ENCODE measurements at regions of chr11 and their contacts with region 1.

Region 1: DNA sequence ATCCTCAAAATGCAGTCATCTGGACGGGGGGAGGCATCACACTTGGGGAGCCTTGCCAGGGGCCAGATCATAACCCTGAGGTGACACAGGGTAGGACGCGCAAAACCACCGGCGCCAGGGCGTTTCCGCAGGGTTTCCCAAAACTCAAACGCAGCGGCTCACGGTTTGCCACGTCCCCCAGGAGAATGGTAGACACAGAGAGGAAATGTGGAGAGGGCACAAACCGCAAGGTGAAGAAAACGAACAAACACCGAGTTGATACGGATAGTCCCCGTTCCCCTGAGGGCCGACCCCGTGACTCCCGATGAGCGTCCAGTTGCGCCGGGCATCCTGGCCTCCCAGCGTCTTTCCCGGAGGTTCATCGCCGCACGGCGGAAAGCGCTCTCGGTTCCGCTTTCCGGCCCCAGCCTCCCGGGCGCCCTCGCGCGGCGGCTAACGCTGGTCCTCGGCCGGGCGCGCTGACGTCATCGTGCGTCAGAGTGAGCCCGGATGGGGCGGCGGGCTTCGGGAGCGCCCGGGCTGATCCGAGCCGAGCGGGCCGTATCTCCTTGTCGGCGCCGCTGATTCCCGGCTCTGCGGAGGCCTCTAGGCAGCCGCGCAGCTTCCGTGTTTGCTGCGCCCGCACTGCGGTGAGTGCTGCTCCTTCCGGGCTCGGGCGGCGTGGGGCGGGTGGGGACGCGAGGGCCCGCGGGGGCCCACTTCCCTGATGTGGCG is at the start of gene BIRC2:
- DNase-seq: peak; percentile 99
- ATAC-seq: peak; percentile 78
- H3K4me3 ChIP-seq: peak within 1 kb of the TSS; percentile 88
- H3K27ac ChIP-seq: peak within 1 kb of the TSS; percentile 90
- H3K4me1 ChIP-seq: peaks cover 34% of the 10 kb centered on the region
- H3K27me3 ChIP-seq: no peaks in the 10 kb centered on the region
- CTCF ChIP-seq: peak; percentile 77
- total RNA-seq, gene BIRC2: 36.1 and 42.6 TPM in 2 replicates

Region 2: GRCh38 chr11:102177974-102178631 is 168.8 kb before region 1 on chr11:
- CTCF ChIA-PET with region 1: no interaction called
- POLR2A ChIA-PET with region 1: no interaction called
- intact Hi-C with region 1: loop called (anchors 5 kb)
- DNase-seq: peak; percentile 99
- ATAC-seq: peak; percentile 90
- H3K4me3 ChIP-seq: peak overlapping the region; percentile 26; the same call in 1 of the 2 replicates
- H3K27ac ChIP-seq: peak overlapping the region; percentile 80
- H3K4me1 ChIP-seq: peaks cover 27% of the 10 kb centered on the region
- H3K27me3 ChIP-seq: no peaks in the 10 kb centered on the region
- CTCF ChIP-seq: no peak

Region 3: GRCh38 chr11:102287964-102288724 is 58.8 kb before region 1 on chr11:
- CTCF ChIA-PET with region 1: no interaction called
- POLR2A ChIA-PET with region 1: no interaction called
- intact Hi-C with region 1: loop called (anchors 1 kb)
- DNase-seq: peak; percentile 96
- ATAC-seq: peak; percentile 70
- H3K4me3 ChIP-seq: peak overlapping the region; percentile 52
- H3K27ac ChIP-seq: peak overlapping the region; percentile 13
- H3K4me1 ChIP-seq: peaks cover 40% of the 10 kb centered on the region
- H3K27me3 ChIP-seq: no peaks in the 10 kb centered on the region
- CTCF ChIP-seq: peak; percentile 93

Region 4: DNA sequence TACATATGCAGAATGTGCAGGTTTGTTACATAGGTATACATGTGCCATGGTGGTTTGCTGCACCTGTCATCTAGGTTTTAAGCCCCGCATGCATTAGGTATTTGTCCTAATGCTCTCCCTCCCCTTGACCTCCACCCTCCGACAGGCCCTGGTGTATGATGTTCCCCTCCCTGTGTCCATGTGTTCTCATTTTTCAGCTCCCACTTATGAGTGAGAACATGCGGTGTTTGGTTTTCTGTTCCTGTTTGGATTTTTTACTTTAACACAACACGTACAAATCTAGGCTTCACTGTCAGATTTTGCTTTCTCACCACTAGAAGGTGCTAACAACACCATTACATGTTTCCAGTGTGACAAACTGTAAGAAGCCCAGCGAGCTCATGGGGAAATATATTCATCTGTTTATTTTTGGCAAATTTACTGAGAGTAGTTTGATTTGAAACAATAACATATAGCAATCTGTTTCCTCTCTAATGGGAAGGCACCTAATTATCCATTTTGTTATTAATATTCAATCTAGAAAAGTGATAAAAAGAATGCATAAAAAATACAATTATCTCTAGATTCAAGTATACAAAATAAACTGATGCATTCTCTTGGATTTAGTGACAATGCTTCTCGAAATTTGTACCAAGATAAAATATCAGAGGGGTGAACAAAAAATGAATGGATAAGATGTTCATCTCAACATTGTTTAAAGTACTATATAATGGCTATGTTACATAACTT is 52.9 kb before region 1 on chr11:
- CTCF ChIA-PET with region 1: interaction called, 7 read pairs
- POLR2A ChIA-PET with region 1: interaction called, 3 read pairs
- intact Hi-C with region 1: loop called (anchors 1 kb)
- DNase-seq: peak; percentile 80
- ATAC-seq: peak; percentile 49
- H3K4me3 ChIP-seq: no peak overlapping the region
- H3K27ac ChIP-seq: no peak overlapping the region
- H3K4me1 ChIP-seq: peaks cover 25% of the 10 kb centered on the region
- H3K27me3 ChIP-seq: no peaks in the 10 kb centered on the region
- CTCF ChIP-seq: peak; percentile 82

Region 5: DNA sequence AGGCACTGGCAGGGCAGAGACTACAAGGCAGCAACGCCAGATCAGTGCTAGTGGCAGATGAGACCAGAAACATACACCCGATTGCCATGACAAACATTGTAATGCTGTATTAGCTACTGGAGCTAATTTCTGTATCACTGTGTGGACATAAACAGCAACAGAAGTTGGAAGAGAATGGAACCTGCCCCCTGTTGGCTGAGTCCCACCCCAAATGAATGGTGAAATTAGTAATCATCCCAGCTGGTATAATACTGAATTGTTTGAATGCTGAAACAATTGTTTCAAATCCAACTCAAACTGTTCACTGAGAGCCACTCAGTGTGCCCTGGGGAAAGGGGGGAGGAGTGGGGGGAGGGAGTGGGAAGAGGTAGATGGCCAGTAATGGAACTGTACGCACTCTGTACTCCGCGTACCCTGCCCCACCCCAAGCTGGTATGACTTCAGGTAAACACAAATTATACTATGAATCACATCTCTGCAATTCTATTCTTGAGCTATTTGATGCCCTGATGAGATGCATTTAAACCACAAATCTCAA is 40.8 kb before region 1 on chr11:
- CTCF ChIA-PET with region 1: interaction called, 4 read pairs
- POLR2A ChIA-PET with region 1: no interaction called
- intact Hi-C with region 1: loop called (anchors 5 kb)
- DNase-seq: peak; percentile 98
- ATAC-seq: peak; percentile 94
- H3K4me3 ChIP-seq: peak overlapping the region; percentile 55
- H3K27ac ChIP-seq: peak overlapping the region; percentile 87
- H3K4me1 ChIP-seq: peaks cover 37% of the 10 kb centered on the region
- H3K27me3 ChIP-seq: no peaks in the 10 kb centered on the region
- CTCF ChIP-seq: peak; percentile 63

Region 6: DNA sequence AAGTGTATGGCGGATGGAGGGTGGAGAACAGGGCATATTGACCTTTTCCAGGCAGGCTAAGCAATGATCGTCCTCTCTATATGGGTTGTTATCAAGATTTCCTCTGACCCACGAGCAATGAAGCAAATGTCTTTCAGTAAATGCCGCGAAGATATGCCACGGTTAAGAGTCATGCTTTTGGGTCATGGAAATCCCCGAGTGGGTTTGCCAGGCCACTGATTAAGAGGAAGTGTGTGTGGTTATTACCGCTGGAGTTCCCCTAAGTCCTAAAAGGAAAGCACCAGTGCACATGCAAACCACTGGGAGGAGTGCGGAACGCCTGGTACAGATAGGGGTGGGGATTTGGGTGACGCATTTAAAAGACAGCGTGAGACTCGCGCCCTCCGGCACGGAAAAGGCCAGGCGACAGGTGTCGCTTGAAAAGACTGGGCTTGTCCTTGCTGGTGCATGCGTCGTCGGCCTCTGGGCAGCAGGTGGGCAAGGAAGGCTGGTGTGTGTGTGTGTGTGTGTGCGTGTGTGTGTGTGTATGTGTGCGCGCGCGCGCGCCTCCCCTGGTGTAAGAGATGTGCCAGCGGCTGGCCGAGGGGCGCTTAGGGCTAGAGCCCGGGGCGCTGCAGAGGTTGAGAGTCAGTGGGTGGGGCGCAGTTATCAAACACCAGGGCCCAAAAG is 29.7 kb before region 1 on chr11 and contains the start of gene BIRC3:
- CTCF ChIA-PET with region 1: interaction called, 3 read pairs
- POLR2A ChIA-PET with region 1: interaction called, 14 read pairs
- intact Hi-C with region 1: loop called (anchors 1 kb)
- DNase-seq: peak; percentile 97
- ATAC-seq: peak; percentile 88
- H3K4me3 ChIP-seq: peak within 1 kb of the TSS; percentile 66
- H3K27ac ChIP-seq: peak within 1 kb of the TSS; percentile 74
- H3K4me1 ChIP-seq: peaks cover 35% of the 10 kb centered on the region
- H3K27me3 ChIP-seq: no peaks in the 10 kb centered on the region
- CTCF ChIP-seq: no peak; the same call in 1 of the 2 replicates
- total RNA-seq, gene BIRC3: 3.9 and 4.2 TPM in 2 replicates

Region 7: DNA sequence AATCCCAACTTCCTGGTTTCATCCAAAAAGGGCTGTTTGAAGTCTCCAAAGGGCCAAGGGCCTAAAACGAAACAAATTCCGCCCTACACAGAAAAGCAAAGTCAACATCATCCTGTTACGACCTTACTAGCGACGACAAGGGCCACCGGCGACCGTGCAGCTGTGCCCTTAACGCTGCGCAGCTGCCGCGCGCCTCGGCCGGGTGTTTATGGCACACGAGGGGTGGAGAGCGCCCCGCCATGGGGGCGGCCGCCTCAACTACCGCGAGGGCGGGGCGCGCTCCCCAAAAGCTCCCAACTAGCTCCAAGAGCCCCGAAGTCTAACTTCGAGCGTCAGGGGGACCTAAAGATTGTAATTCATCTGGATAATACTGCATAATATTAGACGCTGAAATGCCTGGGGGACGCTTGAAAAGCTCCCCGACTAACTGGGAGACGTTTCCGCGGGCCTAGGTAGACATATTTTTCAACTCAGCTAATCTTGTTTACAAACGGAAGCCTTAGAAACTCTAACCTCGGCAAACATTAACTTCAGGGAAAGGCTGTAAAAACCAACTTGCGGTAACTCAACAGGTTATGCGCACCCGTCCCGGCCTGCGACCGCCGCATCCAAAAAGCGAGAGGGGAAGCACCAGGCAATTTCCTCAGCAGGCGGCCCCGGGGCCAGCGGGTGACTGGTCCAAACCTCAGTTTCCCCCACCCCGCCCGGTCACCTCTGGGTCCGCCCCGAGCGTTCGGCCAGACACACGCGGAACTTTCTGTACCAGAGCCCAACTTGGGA is 105.0 kb after region 1 on chr11:
- CTCF ChIA-PET with region 1: no interaction called
- POLR2A ChIA-PET with region 1: no interaction called
- intact Hi-C with region 1: loop called (anchors 2 kb)
- DNase-seq: peak; percentile 67
- ATAC-seq: peak; percentile 49
- H3K4me3 ChIP-seq: peak overlapping the region; percentile 81
- H3K27ac ChIP-seq: peak overlapping the region; percentile 65
- H3K4me1 ChIP-seq: peaks cover 56% of the 10 kb centered on the region
- H3K27me3 ChIP-seq: no peaks in the 10 kb centered on the region
- CTCF ChIP-seq: peak; percentile 44; the same call in 1 of the 2 replicates

Measured in PC-3 (cell line).